ENCODE measurements at regions of chr22 and their contacts with region 1.

Region 1: DNA sequence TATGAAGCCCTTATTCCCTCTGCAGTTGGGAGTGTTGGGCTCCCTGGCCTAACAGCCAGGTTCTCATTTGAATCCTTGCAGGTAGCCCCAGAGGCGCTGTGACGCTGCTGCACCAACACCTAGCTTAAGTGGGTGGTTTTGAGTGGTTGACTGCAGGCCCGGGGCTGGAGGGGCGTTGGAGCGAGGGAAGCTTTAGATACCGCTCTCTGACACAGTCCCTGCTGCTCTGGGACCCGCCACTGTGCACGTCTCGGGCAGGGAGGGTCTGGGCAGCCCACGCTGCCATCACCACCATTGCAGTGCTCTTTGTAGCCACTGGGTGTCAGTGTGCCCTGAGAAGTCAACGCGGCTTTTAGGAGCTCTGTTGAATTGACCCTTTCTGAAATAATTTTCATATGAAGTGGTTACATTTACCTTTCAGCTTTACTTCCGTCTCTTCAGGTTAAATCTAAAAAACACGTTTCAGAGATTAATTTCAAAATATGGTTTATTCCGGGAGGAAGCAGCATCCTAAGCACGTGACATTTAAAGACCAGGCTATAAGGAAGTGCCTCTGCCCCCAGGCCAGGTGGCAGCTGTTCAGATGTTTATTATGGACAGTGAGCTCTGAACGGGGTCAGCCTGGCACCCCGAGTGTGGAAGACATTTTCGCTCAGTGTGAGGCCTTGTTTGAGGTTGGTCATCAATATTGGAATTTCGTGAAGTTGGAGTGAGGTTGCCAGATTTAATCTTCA is 30.9 kb upstream of the PARVB start:
- DNase-seq: no peak

Region 2: GRCh38 chr22:44080936-44081861 is 88.0 kb after region 1 on chr22:
- intact Hi-C with region 1: loop called (anchors 2 kb)
- DNase-seq: peak; percentile 81